Ovary (tissue), 10 donors: ENCODE measurements at regions of chr20 and their contacts with region 1.

Region 1: GRCh38 chr20:51311606-51312495 is 230.7 kb downstream of the NFATC2 start:
- DNase-seq: no peak
- H3K4me3 ChIP-seq: no peak overlapping the region
- H3K27ac ChIP-seq: no peak overlapping the region
- H3K4me1 ChIP-seq: no peaks in the 10 kb centered on the region
- H3K27me3 ChIP-seq: no peaks in the 10 kb centered on the region
- CTCF ChIP-seq: no peak
- EP300 ChIP-seq: no peak
- POLR2A ChIP-seq: no peak

Region 2: DNA sequence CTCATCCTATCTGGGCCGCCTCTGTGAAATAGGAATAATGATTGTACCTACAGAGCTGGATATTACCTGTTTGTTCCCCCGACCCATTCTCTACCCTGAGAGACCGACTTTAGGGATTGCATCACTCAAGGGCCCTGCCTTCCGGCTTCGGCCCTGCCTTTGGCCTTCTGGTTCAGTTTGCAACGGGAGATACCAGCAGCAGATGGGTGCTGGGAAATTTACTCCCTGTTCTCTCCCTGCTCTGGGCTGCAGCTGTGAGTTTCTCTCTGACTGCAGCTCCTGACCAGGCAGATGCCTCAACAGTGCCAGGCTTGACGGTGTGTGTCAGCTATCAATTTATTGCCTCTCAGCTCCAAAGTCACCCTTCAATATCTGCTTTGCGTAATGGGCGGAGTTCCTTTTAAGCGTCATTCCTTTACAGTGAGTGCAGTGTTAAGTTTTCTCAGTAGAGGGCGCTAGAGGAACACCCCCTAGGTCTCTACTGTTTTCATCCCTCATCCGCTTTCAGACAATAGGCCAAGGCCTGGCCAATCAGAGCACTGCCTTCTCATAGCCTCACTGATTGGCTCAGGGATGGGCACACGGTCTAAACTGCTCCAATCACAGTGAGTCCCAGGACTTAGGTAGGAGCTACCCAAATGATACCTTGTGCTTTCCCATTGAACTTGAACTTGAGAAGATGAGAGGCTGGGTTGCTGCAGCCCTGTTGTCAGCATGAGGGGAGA is 319.0 kb before region 1 on chr20:
- intact Hi-C with region 1: loop called in 3 of 4 experiments (anchors 2 to 5 kb)
- DNase-seq: no peak
- H3K4me3 ChIP-seq: no peak overlapping the region
- H3K27ac ChIP-seq: no peak overlapping the region
- H3K4me1 ChIP-seq: no peaks in the 10 kb centered on the region
- H3K27me3 ChIP-seq: no peaks in the 10 kb centered on the region
- CTCF ChIP-seq: no peak
- EP300 ChIP-seq: no peak
- POLR2A ChIP-seq: no peak

Region 3: GRCh38 chr20:51372176-51372803 is 60.4 kb after region 1 on chr20:
- intact Hi-C with region 1: no loop called
- DNase-seq: peak; percentile 68 to 82 (median 74)
- H3K4me3 ChIP-seq: no peak overlapping the region
- H3K27ac ChIP-seq: no peak overlapping the region
- H3K4me1 ChIP-seq: peaks cover 3% of the 10 kb centered on the region
- H3K27me3 ChIP-seq: no peaks in the 10 kb centered on the region
- CTCF ChIP-seq: peak; percentile 54 to 79 (median 77)
- EP300 ChIP-seq: no peak
- POLR2A ChIP-seq: no peak